GM18951 (cell line): ENCODE measurements at regions of chr10 and their contacts with region 1.

Region 1: DNA sequence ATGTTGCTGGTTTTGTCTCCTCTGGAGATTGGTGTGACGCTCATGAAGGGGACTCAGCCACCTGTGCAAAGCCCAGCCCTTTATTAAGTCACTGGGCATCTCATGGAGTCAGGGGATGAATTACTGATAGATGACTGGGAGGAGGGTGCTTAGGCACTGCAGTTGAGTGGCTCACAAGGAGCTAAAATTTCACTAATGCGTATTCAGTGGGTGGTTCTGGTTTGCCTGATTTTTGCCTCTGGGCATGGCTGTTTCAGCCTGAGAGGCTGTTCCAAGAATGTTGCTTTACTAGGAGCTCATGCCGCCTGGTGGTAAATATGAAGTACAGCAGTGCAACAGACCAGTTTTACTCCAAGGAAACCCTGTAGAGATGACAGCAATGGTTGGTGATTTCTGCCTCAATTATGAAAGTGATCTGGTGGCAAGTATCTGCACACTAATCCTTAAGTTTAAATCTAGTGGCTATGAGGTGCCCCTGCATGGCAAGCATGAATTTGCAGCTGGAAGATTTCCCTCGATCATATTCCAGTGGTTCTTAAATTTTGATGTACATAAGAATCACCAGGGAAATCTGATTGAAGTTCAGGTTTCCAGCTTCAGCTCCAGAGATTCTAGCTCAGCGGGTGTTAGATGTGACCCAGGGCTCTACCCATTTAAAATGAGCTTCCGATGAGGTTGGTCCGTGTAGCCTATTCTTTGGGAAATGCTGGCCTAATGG is 19.9 kb downstream of the ACTA2 start:
- POLR2A ChIP-seq: no peak

Region 2: DNA sequence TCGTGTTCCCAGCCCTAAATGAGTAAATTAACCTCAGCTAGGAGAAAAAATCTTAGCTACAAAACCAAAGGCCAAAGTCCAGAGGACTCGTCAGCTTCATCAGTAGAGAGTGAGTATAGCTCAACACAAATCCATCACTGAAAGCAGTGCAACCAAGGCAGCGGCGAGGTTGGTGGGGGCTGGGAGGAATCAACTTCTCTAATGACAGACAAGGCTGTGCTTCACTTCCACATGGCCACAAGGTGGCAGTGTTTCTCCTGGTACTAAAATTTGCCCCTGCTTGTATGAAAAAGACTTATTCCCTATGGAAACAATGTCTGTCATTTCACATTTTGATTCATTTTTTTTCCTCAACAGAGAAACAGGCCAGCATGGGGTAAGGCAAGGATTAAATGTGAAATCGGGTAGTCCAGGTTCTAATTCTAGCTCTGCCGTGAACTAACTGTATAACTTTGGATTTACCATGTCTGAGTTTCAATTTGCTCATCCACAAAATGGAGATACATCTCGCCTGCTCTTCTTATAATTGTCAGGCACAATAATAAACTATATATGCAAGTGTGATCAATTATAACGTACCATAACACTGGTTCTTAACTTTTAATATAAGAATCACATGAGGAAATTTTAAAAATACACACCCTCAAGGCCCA is 97.2 kb after region 1 on chr10:
- in situ Hi-C with region 1: loop called (anchors 10 kb)
- POLR2A ChIP-seq: no peak

Region 3: GRCh38 chr10:89224739-89225443 is 292.2 kb after region 1 on chr10:
- in situ Hi-C with region 1: loop called (anchors 10 kb)
- POLR2A ChIP-seq: no peak